Lower leg skin (tissue), 4 donors: ENCODE measurements at regions of chr5 and their contacts with region 1.

Region 1: GRCh38 chr5:122415030-122415800 is 103.2 kb downstream of the SNCAIP start:
- DNase-seq: peak in 1 of 2 donors; percentile 34
- H3K4me3 ChIP-seq: no peak overlapping the region
- CTCF ChIP-seq: no peak
- POLR2A ChIP-seq: no peak

Region 2: DNA sequence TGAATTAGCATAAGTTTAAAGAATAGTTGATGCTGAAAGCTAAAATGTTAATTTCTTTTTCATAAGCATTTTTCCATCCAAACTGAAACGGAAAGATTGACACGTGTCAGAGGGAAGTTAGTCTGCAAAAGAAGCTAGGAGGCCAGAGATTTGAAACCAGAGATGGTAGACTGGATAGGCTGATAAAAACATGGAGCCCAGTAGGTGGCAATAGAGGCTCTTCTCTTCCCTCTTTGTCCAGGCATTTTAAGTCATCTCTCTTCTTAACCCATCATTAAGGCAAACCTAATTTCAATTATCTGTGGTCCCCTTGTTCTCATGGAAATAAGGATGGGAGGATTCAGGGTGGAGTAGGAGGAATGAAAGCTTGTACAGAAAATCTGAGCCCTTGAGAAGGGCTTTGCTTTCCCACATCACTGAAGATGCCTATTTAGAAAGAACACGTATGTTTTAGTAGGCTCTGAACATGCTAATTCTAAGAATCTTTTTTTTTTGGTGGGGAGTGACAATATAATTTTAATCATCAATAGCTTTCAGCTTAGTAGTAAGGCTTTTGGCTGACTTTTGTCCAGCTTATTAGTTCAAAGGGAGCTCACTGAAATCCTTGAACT is 219.3 kb before region 1 on chr5:
- intact Hi-C with region 1: loop called (anchors 5 kb)
- DNase-seq: no peak
- H3K4me3 ChIP-seq: no peak overlapping the region
- CTCF ChIP-seq: no peak
- POLR2A ChIP-seq: no peak

Region 3: GRCh38 chr5:122442938-122443337 is 27.7 kb after region 1 on chr5:
- intact Hi-C with region 1: no loop called
- DNase-seq: no peak
- H3K4me3 ChIP-seq: no peak overlapping the region
- CTCF ChIP-seq: no peak
- POLR2A ChIP-seq: no peak

Region 4: DNA sequence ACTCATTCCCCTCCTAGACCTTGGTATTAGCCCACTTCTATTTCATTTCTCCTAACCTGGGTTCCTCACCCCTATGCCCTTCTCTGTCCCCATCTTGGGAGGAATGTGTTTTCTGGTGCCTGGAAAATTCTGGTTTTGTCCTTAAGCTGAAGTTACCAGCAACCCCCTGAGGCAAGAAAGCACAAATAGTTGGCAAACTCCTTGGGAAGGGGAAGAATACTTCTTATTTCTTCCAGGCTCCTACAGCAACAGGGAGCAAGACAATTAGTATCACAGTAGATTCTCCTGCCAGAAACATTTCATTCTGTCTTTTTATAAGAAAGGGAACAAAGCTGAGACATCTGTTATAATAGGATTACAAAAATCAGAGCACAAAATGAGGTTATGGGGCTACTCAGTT is 39.3 kb after region 1 on chr5:
- intact Hi-C with region 1: loop called (anchors 2 kb)
- DNase-seq: no peak
- H3K4me3 ChIP-seq: no peak overlapping the region
- CTCF ChIP-seq: no peak
- POLR2A ChIP-seq: no peak